ENCODE measurements at regions of chr9 and their contacts with region 1.

Region 1: GRCh38 chr9:83937911-83938323 is 16.7 kb upstream of the KIF27 start:
- DNase-seq: no peak
- H3K4me3 ChIP-seq: no peak overlapping the region
- H3K27ac ChIP-seq: no peak overlapping the region
- H3K4me1 ChIP-seq: peaks cover 21% of the 10 kb centered on the region
- H3K27me3 ChIP-seq: no peaks in the 10 kb centered on the region
- CTCF ChIP-seq: peak; percentile 78

Region 2: GRCh38 chr9:84002344-84002743 is 64.4 kb after region 1 on chr9:
- intact Hi-C with region 1: no loop called
- DNase-seq: no peak
- H3K4me3 ChIP-seq: no peak overlapping the region
- H3K27ac ChIP-seq: peak overlapping the region; percentile 7
- H3K4me1 ChIP-seq: peaks cover 4% of the 10 kb centered on the region
- H3K27me3 ChIP-seq: no peaks in the 10 kb centered on the region
- CTCF ChIP-seq: no peak

Region 3: GRCh38 chr9:84170521-84171141 is 232.7 kb after region 1 on chr9:
- intact Hi-C with region 1: loop called (anchors 5 kb)
- DNase-seq: peak; percentile 90
- H3K4me3 ChIP-seq: no peak overlapping the region
- H3K27ac ChIP-seq: peak overlapping the region; percentile 77
- H3K4me1 ChIP-seq: peaks cover 17% of the 10 kb centered on the region
- H3K27me3 ChIP-seq: no peaks in the 10 kb centered on the region
- CTCF ChIP-seq: peak; percentile 40

Region 4: GRCh38 chr9:84261082-84261746 is 323.3 kb after region 1 on chr9:
- intact Hi-C with region 1: loop called (anchors 2 kb)
- DNase-seq: peak; percentile 83
- H3K4me3 ChIP-seq: peak overlapping the region; percentile 43
- H3K27ac ChIP-seq: no peak overlapping the region
- H3K4me1 ChIP-seq: no peaks in the 10 kb centered on the region
- H3K27me3 ChIP-seq: no peaks in the 10 kb centered on the region
- CTCF ChIP-seq: peak; percentile 97

Region 5: GRCh38 chr9:84285381-84285780 is 347.5 kb after region 1 on chr9:
- intact Hi-C with region 1: no loop called
- DNase-seq: no peak
- H3K4me3 ChIP-seq: no peak overlapping the region
- H3K27ac ChIP-seq: no peak overlapping the region
- H3K4me1 ChIP-seq: no peaks in the 10 kb centered on the region
- H3K27me3 ChIP-seq: no peaks in the 10 kb centered on the region
- CTCF ChIP-seq: no peak

Region 6: GRCh38 chr9:84315278-84315877 is 377.5 kb after region 1 on chr9:
- intact Hi-C with region 1: loop called (anchors 5 kb)
- DNase-seq: peak; percentile 22
- H3K4me3 ChIP-seq: peak overlapping the region; percentile 42
- H3K27ac ChIP-seq: no peak overlapping the region
- H3K4me1 ChIP-seq: peaks cover 5% of the 10 kb centered on the region
- H3K27me3 ChIP-seq: peaks cover 7% of the 10 kb centered on the region
- CTCF ChIP-seq: peak; percentile 87